ENCODE measurements at regions of chr12 and their contacts with region 1.

Region 1: DNA sequence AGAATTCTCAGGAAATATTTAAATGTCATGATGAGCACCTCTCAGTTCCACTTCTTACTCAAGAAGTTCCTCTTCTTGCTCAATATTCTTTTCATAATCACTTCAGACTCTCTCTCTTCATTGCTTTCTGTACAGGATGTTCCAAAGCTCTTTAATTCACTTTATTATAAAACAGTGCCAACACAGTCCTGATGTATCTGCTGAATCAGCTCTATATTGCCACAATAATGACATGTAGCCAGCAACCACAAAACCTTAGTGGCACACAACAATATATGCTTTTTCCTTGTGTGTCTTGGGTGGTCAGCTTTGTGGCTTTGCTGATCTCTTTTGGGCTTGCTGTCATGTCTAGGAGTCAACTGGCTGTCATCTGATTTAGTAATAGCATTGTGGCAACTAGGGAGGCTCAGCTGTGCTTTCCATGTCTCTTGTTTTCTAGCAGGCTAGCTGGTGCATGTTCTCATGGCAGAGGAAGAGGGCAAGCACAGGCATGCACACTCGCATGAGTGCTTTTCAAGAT is 52.8 kb upstream of the SLC2A13 start:
- DNase-seq: peak; percentile 94
- H3K4me3 Mint-ChIP-seq: peak overlapping the region; percentile 56
- H3K27ac Mint-ChIP-seq: peak overlapping the region; percentile 90
- H3K4me1 Mint-ChIP-seq: peaks cover 21% of the 10 kb centered on the region
- H3K27me3 Mint-ChIP-seq: no peaks in the 10 kb centered on the region
- CTCF ChIP-seq: no peak

Region 2: GRCh38 chr12:40063414-40063813 is 95.2 kb before region 1 on chr12:
- CTCF ChIA-PET with region 1: no interaction called
- POLR2A ChIA-PET with region 1: no interaction called
- intact Hi-C with region 1: no loop called
- DNase-seq: peak; percentile 48
- H3K4me3 Mint-ChIP-seq: peak overlapping the region; percentile 19
- H3K27ac Mint-ChIP-seq: no peak overlapping the region
- H3K4me1 Mint-ChIP-seq: peaks cover 13% of the 10 kb centered on the region
- H3K27me3 Mint-ChIP-seq: no peaks in the 10 kb centered on the region
- CTCF ChIP-seq: no peak

Region 3: GRCh38 chr12:40208707-40209446 is 50.2 kb after region 1 on chr12:
- CTCF ChIA-PET with region 1: interaction called, 4 read pairs
- POLR2A ChIA-PET with region 1: interaction called, 52 read pairs
- intact Hi-C with region 1: no loop called
- DNase-seq: no peak
- H3K4me3 Mint-ChIP-seq: no peak overlapping the region
- H3K27ac Mint-ChIP-seq: peak overlapping the region; percentile 13
- H3K4me1 Mint-ChIP-seq: peaks cover 19% of the 10 kb centered on the region
- H3K27me3 Mint-ChIP-seq: no peaks in the 10 kb centered on the region
- CTCF ChIP-seq: no peak

Region 4: DNA sequence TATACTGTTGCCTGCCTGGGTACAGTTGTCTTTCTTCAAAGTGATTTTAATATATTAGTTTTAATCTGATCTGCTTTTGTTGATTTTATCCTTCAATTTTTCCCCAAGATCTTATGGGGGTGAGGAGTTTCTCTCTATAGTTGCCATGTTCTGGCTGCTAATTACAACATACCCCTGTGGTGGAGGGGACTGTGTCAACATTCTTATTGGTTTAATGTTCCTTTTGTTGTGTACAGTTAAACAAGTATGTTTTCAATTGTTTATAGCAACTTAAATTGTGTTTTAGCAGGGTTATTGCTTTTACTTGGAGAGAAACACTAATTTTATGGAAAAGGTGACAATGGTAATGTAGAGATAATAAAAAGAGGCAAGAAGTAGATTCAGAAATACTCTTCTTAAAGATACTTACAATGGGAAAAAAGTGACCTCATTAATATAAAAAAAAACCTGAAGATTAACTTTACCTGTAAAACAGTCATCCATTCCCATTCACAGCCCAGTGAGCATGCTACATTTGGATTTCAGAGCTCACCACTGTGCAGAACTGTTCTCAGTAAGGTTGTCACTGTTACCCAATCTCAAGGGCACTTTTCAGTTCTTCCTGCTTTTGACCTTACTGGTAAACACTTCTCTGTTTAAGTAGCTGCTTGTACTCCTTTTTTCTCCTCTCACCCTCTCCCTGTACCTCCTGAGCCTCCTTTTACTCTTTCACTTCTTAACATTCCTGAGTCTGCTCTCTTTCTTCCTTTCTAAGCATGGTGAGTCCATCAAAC is 58.0 kb after region 1 on chr12:
- CTCF ChIA-PET with region 1: interaction called, 3 read pairs
- POLR2A ChIA-PET with region 1: interaction called, 52 read pairs
- intact Hi-C with region 1: loop called (anchors 5 kb)
- DNase-seq: no peak
- H3K4me3 Mint-ChIP-seq: no peak overlapping the region
- H3K27ac Mint-ChIP-seq: peak overlapping the region; percentile 46
- H3K4me1 Mint-ChIP-seq: peaks cover 25% of the 10 kb centered on the region
- H3K27me3 Mint-ChIP-seq: no peaks in the 10 kb centered on the region
- CTCF ChIP-seq: no peak

Region 5: DNA sequence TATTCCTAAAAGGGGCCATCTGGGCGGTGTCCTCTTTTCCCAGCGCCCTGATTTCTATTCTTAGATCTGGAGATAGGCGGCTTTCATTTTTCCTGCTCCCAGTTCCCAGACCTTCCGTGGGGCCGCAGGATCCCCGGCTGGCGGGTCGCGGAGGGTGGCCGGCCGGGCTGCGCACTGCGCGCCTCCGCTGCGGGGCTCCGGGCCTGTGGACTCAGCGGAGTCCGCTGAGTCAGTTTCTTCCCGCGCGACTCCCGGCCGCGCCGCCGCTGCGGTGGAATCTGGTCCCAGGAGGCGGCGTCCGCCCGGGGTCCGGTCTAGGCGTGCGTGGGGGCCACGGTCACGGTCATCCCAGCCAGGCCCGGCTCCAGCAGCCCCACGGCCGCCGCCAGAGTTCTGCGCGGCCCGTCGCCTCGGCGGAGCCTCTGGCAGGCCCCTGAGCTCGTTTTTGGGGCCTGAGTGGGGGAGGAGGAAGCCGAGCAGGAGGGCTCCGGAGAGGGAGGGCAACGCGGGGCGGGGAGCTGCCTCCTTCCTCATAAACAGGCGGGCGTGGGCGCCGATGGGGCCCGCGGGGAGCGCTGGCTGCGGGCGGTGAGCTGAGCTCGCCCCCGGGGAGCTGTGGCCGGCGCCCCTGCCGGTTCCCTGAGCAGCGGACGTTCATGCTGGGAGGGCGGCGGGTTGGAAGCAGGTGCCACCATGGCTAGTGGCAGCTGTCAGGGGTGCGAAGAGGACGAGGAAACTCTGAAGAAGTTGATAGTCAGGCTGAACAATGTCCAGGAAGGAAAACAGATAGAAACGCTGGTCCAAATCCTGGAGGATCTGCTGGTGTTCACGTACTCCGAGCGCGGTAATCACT is 66.0 kb after region 1 on chr12 and contains the start of gene LRRK2:
- CTCF ChIA-PET with region 1: interaction called, 5 read pairs
- POLR2A ChIA-PET with region 1: interaction called, 50 read pairs
- intact Hi-C with region 1: loop called (anchors 5 kb)
- DNase-seq: peak; percentile 58
- H3K4me3 Mint-ChIP-seq: peak within 1 kb of the TSS; percentile 71
- H3K27ac Mint-ChIP-seq: peak within 1 kb of the TSS; percentile 79
- H3K4me1 Mint-ChIP-seq: peaks cover 42% of the 10 kb centered on the region
- H3K27me3 Mint-ChIP-seq: no peaks in the 10 kb centered on the region
- CTCF ChIP-seq: no peak
- total RNA-seq, gene LRRK2: 4.2 and 4.5 TPM in 2 replicates

Region 6: GRCh38 chr12:40248585-40249297 is 90.1 kb after region 1 on chr12:
- CTCF ChIA-PET with region 1: no interaction called
- POLR2A ChIA-PET with region 1: interaction called, 10 read pairs
- intact Hi-C with region 1: no loop called
- DNase-seq: peak; percentile 66
- H3K4me3 Mint-ChIP-seq: no peak overlapping the region
- H3K27ac Mint-ChIP-seq: no peak overlapping the region
- H3K4me1 Mint-ChIP-seq: peaks cover 6% of the 10 kb centered on the region
- H3K27me3 Mint-ChIP-seq: no peaks in the 10 kb centered on the region
- CTCF ChIP-seq: no peak